IMR-90 (cell line): ENCODE measurements at regions of chr7 and their contacts with region 1.

Region 1: GRCh38 chr7:18151422-18151821 is 123.8 kb upstream of the PRPS1L1 start:
- DNase-seq: no peak
- ATAC-seq: peak; percentile 49; the same call in 1 of the 2 replicates
- H3K4me3 ChIP-seq: no peak overlapping the region
- H3K27ac ChIP-seq: no peak overlapping the region
- H3K4me1 ChIP-seq: no peaks in the 10 kb centered on the region
- H3K27me3 ChIP-seq: peaks cover 2% of the 10 kb centered on the region
- CTCF ChIP-seq: peak; percentile 7; the same call in 1 of the 2 replicates
- POLR2A ChIP-seq: no peak
- RAD21 ChIP-seq: 0 out of 2 replicates have a peak, but pooled peaks have one; percentile 7

Region 2: GRCh38 chr7:18194616-18195015 is 43.2 kb after region 1 on chr7:
- CTCF ChIA-PET with region 1: no interaction called
- POLR2A ChIA-PET with region 1: no interaction called
- dilution Hi-C with region 1: no loop called
- in situ Hi-C with region 1: no loop called
- intact Hi-C with region 1: loop called (anchors 1 kb)
- DNase-seq: no peak
- ATAC-seq: no peak
- H3K4me3 ChIP-seq: no peak overlapping the region
- H3K27ac ChIP-seq: no peak overlapping the region
- H3K4me1 ChIP-seq: no peaks in the 10 kb centered on the region
- H3K27me3 ChIP-seq: no peaks in the 10 kb centered on the region
- CTCF ChIP-seq: no peak
- POLR2A ChIP-seq: no peak
- RAD21 ChIP-seq: no peak